ENCODE measurements at regions of chr11 and their contacts with region 1.

Region 1: DNA sequence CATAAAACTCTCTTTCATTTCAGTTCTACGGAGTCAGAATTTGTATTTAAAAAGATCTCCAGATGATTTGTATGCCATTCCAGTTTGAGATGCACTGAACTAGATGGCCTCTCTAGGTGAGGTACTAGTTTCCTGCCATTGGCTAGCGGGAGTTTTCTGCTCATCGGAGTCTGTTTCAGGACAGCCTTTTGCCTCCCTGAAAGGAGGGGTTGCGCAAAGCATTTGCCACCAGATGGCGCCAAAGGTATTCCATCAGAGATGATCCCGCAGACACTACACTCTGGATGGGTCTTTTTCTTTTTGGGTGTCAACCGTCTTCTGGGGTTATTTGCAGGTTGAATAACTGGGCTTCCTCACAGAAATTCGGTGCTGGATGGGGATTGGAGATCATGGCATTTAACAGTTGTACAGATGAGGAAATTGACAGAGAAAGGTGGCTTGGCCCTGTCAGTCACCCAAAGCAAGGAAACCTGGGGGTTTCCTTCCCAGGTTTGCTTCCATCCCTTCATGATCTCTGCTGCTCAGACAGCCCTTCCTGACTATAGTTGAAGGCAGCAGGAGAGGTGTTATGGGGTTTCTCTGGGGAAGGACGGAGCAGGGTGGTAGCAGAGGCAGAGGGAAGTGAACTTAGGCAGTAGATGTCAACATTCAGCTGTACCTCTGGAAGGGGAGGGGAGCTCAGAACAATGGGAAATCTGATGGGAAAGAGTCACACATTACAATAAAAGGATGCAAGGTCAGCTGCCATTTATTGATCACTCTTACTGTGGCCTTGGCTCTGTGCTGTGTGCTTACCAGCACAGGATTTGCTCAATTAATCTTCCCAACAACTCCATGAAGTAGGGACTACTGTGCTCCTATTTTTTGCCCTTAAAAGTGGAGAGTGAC is 81.6 kb downstream of the CCDC81 start:
- DNase-seq: peak; percentile 78
- H3K4me3 ChIP-seq: no peak overlapping the region
- H3K27ac ChIP-seq: no peak overlapping the region
- H3K4me1 ChIP-seq: peaks cover 31% of the 10 kb centered on the region
- H3K27me3 ChIP-seq: no peaks in the 10 kb centered on the region
- CTCF ChIP-seq: peak; percentile 96

Region 2: DNA sequence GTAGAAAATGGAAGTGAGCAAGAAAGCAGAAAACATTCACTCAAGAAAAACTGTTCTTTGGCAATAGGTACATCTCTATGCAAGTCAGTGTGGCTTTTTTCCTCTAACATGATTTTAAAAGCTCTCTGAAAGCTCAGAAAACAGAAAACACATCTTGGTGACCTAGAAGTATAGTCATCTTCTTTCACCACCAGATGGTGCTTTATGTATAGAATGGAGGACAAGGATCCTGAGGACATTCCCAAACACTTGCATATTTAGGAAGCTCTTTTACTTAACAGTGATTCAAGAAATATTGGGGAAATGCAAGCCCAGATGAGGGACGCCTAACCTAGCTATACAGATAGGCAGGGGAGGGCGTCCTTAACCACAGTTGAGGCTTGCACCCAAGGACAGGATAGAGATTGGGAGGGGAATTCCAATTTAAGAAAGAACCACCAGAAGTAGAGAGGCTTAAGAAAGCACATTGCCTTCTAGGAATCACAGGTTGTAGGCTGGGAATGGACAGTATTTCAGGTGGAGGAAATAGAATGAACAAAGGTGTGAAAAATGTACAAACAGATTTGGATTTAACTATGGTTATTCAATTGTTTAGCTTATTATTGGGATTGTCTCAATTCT is 95.4 kb before region 1 on chr11:
- CTCF ChIA-PET with region 1: no interaction called
- POLR2A ChIA-PET with region 1: no interaction called
- intact Hi-C with region 1: loop called (anchors 5 kb)
- DNase-seq: peak in 1 of 2 experiments; percentile 65
- H3K4me3 ChIP-seq: no peak overlapping the region
- H3K27ac ChIP-seq: no peak overlapping the region
- H3K4me1 ChIP-seq: no peaks in the 10 kb centered on the region
- H3K27me3 ChIP-seq: no peaks in the 10 kb centered on the region
- CTCF ChIP-seq: peak; percentile 77

Region 3: DNA sequence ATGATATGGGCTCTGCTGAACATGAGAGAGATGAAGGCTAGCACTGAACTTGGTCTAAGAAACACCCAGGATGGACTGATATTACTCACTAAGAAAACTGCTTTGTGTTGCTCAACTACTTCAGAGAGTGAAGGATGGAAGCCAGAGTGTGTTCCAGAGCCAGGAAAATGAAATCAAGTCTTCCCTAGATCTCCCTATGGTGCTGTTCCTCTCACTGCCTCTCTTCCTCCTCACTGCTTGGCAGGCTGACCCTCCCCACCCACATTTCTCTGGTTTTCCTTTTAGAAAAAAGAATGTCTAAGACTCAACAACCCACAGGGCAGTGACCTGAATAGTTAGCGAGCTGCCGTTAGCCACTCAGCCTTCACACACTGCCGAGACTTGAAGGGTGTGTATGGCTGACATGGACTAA is 16.0 kb before region 1 on chr11:
- CTCF ChIA-PET with region 1: no interaction called
- POLR2A ChIA-PET with region 1: no interaction called
- intact Hi-C with region 1: no loop called
- DNase-seq: no peak
- H3K4me3 ChIP-seq: no peak overlapping the region
- H3K27ac ChIP-seq: no peak overlapping the region
- H3K4me1 ChIP-seq: peaks cover 10% of the 10 kb centered on the region
- H3K27me3 ChIP-seq: no peaks in the 10 kb centered on the region
- CTCF ChIP-seq: no peak

Region 4: DNA sequence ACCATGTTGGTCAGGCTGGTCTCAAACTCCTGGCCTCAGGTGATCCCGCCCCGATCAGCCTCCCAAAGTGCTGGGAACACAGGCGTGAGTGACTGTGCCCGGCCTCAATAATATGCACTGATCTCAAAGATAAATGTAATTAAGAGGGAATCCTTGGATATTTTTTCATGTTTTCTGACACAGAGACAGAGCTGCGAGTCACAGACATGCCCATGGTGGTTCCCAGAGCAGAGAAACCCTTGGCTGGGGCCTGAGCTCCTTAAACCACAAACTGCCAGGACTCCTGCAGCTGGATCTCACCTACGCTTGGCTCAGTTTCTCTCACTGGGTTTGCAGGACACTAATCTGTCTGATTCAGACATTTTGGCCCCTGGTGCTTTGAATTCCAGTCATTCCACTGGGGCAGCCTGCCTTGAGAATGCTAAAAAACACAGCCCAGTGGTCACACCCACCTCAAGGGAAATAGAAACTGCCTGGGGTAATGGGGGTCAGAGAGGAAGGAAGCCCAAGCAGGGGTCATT is 40.9 kb after region 1 on chr11:
- CTCF ChIA-PET with region 1: no interaction called
- POLR2A ChIA-PET with region 1: interaction called, 7 read pairs
- intact Hi-C with region 1: loop called (anchors 1 kb)
- DNase-seq: peak; percentile 81 to 96
- H3K4me3 ChIP-seq: no peak overlapping the region
- H3K27ac ChIP-seq: peak overlapping the region; percentile 91
- H3K4me1 ChIP-seq: peaks cover 55% of the 10 kb centered on the region
- H3K27me3 ChIP-seq: no peaks in the 10 kb centered on the region
- CTCF ChIP-seq: no peak

Region 5: DNA sequence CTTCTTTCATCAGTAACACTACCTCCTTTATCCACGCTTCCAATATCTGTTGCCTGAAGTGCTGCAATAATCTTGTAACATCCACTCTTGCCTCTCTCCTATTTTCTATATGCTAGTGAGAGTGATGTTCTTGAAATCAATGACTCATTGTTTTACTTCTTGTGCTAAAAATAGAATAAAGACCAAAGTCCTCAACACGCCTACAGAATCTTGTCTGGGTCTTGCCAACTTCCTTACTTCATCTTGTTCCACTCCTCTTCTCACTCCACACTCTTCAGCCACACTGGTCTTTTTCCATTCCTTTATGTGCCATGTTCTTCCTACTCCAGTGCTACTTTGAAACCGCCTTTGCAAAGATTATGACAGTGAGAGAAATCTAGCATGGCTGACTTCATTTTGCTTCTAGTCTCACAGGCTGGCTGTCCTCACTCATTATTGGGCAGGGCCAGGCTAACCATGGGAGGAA is 54.8 kb after region 1 on chr11:
- CTCF ChIA-PET with region 1: no interaction called
- POLR2A ChIA-PET with region 1: no interaction called
- intact Hi-C with region 1: no loop called
- DNase-seq: no peak
- H3K4me3 ChIP-seq: no peak overlapping the region
- H3K27ac ChIP-seq: peak overlapping the region; percentile 45; the same call in 1 of the 2 replicates
- H3K4me1 ChIP-seq: peaks cover 39% of the 10 kb centered on the region
- H3K27me3 ChIP-seq: no peaks in the 10 kb centered on the region
- CTCF ChIP-seq: no peak

Region 6: GRCh38 chr11:86608251-86608799 is 152.0 kb after region 1 on chr11:
- CTCF ChIA-PET with region 1: no interaction called
- POLR2A ChIA-PET with region 1: interaction called, 3 read pairs
- intact Hi-C with region 1: loop called (anchors 1 kb)
- DNase-seq: peak; percentile 72 to 73
- H3K4me3 ChIP-seq: no peak overlapping the region
- H3K27ac ChIP-seq: no peak overlapping the region
- H3K4me1 ChIP-seq: peaks cover 22% of the 10 kb centered on the region
- H3K27me3 ChIP-seq: no peaks in the 10 kb centered on the region
- CTCF ChIP-seq: peak; percentile 96

Region 7: DNA sequence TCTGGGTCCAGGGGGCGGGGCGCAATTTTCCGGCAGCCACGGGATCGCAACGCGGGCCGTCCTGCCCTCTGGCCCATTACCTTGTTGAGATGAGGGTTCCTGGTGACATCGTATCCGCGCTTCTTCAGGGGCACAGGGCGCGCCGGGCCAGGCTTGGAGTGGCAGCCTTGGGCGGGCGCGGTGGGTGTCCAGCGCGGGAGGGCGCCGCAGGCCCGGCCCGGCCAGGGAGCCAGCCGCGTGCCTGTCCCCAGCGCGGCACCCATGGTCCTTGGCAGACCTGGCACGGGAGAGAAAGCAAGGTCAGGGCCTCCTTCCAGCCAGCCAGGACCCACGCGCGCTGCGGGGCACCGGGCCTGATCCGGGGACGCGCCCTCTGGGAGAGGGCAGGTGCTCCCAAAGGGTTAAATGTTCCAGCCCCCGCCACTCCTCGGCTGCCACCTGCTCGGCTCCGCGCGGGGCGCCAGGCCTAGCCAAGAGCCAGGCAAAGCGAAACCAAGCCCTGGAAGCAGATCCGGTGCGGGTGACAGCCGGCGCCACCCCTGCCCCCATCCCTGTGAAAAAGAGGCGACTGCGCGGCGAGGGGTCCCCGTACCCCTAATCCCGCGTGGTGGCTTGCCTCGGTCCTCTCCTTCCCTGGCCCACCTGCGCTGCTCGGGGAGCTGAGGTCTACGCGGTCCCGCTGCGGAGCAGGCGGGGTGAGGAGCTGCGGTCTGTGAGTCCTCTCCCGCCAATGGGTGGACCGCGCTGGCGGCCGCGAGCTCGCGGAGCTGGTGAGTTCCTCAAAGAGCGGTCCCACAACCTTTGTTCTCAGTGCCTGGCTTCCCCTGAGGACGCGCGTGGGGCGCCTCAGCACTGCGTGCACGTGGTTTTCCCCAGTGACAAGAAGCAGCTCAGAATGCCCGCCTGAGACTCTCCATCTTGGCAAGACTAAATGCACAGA is 215.7 kb after region 1 on chr11 and contains the start of gene ME3:
- CTCF ChIA-PET with region 1: no interaction called
- POLR2A ChIA-PET with region 1: no interaction called
- intact Hi-C with region 1: loop called (anchors 1 kb)
- DNase-seq: peak; percentile 63 to 74
- H3K4me3 ChIP-seq: peak within 1 kb of the TSS; percentile 82
- H3K27ac ChIP-seq: peak within 1 kb of the TSS; percentile 87
- H3K4me1 ChIP-seq: peaks cover 52% of the 10 kb centered on the region
- H3K27me3 ChIP-seq: no peaks in the 10 kb centered on the region
- CTCF ChIP-seq: no peak
- total RNA-seq, gene ME3: 34.0 and 61.1 TPM in 2 replicates

Region 8: DNA sequence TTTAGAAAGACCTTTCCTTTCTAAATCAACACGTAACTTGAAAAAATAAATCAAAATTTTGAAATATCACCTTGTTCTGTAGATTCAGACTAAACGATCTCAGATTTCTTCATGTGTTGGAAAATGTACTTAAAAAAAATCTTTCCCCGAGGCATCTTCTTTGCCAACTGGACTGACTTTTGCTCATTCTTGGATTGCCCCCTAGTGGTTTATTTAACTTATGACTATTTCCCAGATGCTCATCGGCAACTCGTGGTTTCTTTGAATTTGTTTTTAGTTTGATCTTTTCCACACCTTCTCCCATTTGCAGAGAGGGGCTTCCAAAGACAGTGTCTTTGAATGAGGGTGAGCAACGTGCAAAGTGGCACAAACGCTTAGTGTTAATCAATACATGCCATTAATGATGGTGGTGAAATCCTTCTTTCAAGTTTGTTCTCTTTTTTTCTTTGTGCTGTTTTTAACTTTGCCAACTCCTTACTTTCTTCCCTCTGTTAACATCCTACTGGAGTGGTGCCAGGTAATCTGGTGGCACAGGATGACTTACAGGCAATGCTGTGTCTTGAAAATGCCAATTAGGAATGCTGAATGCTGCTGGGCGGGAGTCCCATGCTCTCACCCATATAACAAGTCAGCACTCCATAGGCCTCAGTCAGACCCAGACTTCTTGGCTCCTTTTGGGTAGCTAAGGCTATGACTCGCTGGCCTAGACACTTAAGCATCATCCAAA is 362.3 kb after region 1 on chr11:
- CTCF ChIA-PET with region 1: no interaction called
- POLR2A ChIA-PET with region 1: no interaction called
- intact Hi-C with region 1: loop called (anchors 1 kb)
- DNase-seq: peak in 1 of 2 experiments; percentile 77
- H3K4me3 ChIP-seq: no peak overlapping the region
- H3K27ac ChIP-seq: no peak overlapping the region
- H3K4me1 ChIP-seq: peaks cover 20% of the 10 kb centered on the region
- H3K27me3 ChIP-seq: no peaks in the 10 kb centered on the region
- CTCF ChIP-seq: peak; percentile 94